Caco-2 (cell line): ENCODE measurements at regions of chr5 and their contacts with region 1.

Region 1: GRCh38 chr5:37370864-37371726 is at the start of gene NUP155:
- DNase-seq: peak; percentile 90 to 95
- H3K4me3 ChIP-seq: peak within 1 kb of the TSS; percentile 90
- H3K4me3 Mint-ChIP-seq: peak within 1 kb of the TSS; percentile 92
- H3K27ac Mint-ChIP-seq: peak within 1 kb of the TSS; percentile 97
- H3K4me1 ChIP-seq: peaks cover 8% of the 10 kb centered on the region
- H3K4me1 Mint-ChIP-seq: peaks cover 17% of the 10 kb centered on the region
- H3K27me3 ChIP-seq: no peaks in the 10 kb centered on the region
- H3K27me3 Mint-ChIP-seq: no peaks in the 10 kb centered on the region
- CTCF ChIP-seq: no peak
- total RNA-seq, gene NUP155: 63.9 and 65.3 TPM in 2 replicates

Region 2: GRCh38 chr5:37234288-37234687 is 136.8 kb before region 1 on chr5:
- CTCF ChIA-PET with region 1: no interaction called
- POLR2A ChIA-PET with region 1: interaction called, 10 read pairs
- intact Hi-C with region 1: no loop called
- DNase-seq: no peak
- H3K4me3 ChIP-seq: no peak overlapping the region
- H3K4me3 Mint-ChIP-seq: no peak overlapping the region
- H3K27ac Mint-ChIP-seq: no peak overlapping the region
- H3K4me1 ChIP-seq: no peaks in the 10 kb centered on the region
- H3K4me1 Mint-ChIP-seq: no peaks in the 10 kb centered on the region
- H3K27me3 ChIP-seq: no peaks in the 10 kb centered on the region
- H3K27me3 Mint-ChIP-seq: no peaks in the 10 kb centered on the region
- CTCF ChIP-seq: no peak

Region 3: GRCh38 chr5:37355166-37355565 is 15.9 kb before region 1 on chr5:
- CTCF ChIA-PET with region 1: interaction called, 12 read pairs
- POLR2A ChIA-PET with region 1: interaction called, 13 read pairs
- intact Hi-C with region 1: no loop called
- DNase-seq: no peak
- H3K4me3 ChIP-seq: no peak overlapping the region
- H3K4me3 Mint-ChIP-seq: no peak overlapping the region
- H3K27ac Mint-ChIP-seq: no peak overlapping the region
- H3K4me1 ChIP-seq: no peaks in the 10 kb centered on the region
- H3K4me1 Mint-ChIP-seq: no peaks in the 10 kb centered on the region
- H3K27me3 ChIP-seq: no peaks in the 10 kb centered on the region
- H3K27me3 Mint-ChIP-seq: no peaks in the 10 kb centered on the region
- CTCF ChIP-seq: no peak